Ascending aorta (tissue), 2 donors: ENCODE measurements at regions of chr13 and their contacts with region 1.

Region 1: GRCh38 chr13:114314074-114314912 is at the start of gene CHAMP1:
- DNase-seq: peak; percentile 79 to 98
- H3K4me3 ChIP-seq: peak within 1 kb of the TSS; percentile 89 to 99
- H3K27ac ChIP-seq: peak within 1 kb of the TSS; percentile 89 to 91
- H3K4me1 ChIP-seq: peaks cover 4 to 22% of the 10 kb centered on the region in 2 donors
- H3K27me3 ChIP-seq: no peaks in the 10 kb centered on the region
- CTCF ChIP-seq: no peak
- total RNA-seq, gene CHAMP1: 17.1 TPM

Region 2: GRCh38 chr13:113350065-113350937 is 964.0 kb before region 1 on chr13:
- intact Hi-C with region 1: no loop called
- DNase-seq: no peak
- H3K4me3 ChIP-seq: no peak overlapping the region
- H3K27ac ChIP-seq: no peak overlapping the region
- H3K4me1 ChIP-seq: no peaks in the 10 kb centered on the region
- H3K27me3 ChIP-seq: no peaks in the 10 kb centered on the region
- CTCF ChIP-seq: no peak

Region 3: DNA sequence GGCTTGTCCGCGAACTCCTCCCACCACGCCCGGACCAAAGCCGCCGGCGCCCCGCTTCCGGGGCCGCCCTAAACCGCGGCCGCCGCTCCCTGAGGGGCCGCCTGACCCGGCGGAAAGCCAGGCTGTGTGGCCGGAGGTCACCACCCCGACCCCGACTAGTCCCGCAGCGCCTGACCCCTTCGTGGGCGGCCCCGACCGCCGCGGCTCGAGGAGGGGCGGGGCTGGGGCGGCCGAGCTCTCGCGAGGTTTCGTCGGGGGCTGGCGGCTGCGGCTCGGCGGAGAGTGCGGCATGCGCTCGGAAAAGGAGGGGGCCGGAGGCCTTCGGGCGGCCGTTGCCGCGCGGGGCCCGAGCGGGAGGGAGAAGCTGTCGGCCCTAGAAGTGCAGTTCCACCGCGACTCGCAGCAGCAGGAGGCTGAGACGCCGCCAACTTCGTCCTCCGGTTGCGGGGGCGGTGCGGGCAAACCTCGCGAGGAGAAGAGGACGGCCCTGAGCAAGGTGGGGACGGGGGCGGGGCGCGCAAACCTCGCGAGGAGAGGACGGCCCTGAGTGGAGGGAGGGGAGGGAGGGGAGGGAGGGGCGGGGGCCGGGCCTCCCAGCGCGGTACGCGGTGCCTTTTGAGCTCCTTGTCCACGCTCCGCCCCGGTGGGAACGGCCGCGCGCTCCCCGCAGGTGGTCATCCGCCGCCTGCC is 32.8 kb before region 1 on chr13 and contains the start of gene UPF3A:
- intact Hi-C with region 1: loop called (anchors 1 kb)
- DNase-seq: peak; percentile 55 to 93
- H3K4me3 ChIP-seq: peak within 1 kb of the TSS; percentile 71 to 82
- H3K27ac ChIP-seq: peak within 1 kb of the TSS; percentile 96 to 97
- H3K4me1 ChIP-seq: peaks cover 0 to 16% of the 10 kb centered on the region in 2 donors
- H3K27me3 ChIP-seq: no peaks in the 10 kb centered on the region
- CTCF ChIP-seq: no peak
- total RNA-seq, gene UPF3A: 79.8 TPM